ENCODE measurements at regions of chr2 and their contacts with region 1.

Region 1: DNA sequence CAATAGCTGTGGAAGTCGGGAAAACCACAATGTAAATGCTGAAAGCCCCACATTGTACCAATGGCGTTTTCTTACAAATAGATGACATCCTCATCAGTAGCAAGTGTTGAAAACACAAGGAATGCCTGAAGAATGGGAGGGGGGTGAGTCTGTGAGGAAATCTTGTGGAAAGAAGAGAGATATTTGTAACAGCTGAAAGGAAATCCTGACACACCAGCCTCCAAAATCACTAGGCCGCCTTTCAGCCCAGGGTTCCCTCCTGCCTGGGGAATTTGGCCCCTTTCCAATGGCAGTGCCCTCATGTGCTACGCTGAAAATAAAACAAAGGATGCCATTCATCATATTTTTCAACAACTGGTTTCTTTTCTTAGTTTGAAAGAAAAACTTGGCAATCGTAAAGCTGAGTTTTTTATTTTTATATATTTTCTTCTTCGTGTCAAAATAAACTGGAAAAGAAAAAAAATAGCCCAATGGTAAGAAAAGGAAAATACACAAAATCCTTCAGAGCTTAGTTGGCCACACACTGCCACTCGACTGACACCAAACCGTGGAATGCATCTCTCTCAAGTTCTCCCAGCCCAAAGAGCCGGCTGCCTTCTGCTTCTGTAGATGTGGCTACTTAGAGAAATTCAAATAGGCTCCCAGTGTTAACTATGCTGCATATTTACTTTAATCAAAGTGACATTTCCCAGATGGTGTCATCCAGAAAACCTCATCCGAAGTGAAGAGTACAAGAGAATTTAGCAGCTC is 52.0 kb downstream of the FTCDNL1 start:
- DNase-seq: peak; percentile 18 to 67 (median 56)
- H3K4me3 ChIP-seq: peak overlapping the region in 37 of 59 donors; percentile 1 to 54 (median 28)
- H3K27ac ChIP-seq: peak overlapping the region in 58 of 59 donors; percentile 55 to 96 (median 85)
- H3K27me3 ChIP-seq: no peaks in the 10 kb centered on the region
- CTCF ChIP-seq: peak in 5 of 56 donors; percentile 8 to 26 (median 13)

Region 2: GRCh38 chr2:199757233-199757870 is 41.7 kb before region 1 on chr2:
- intact Hi-C with region 1: loop called (anchors 1 to 5 kb)
- DNase-seq: peak; percentile 21 to 96 (median 90)
- H3K4me3 ChIP-seq: peak overlapping the region in 47 of 59 donors; percentile 3 to 62 (median 30)
- H3K27ac ChIP-seq: peak overlapping the region in 55 of 59 donors; percentile 19 to 87 (median 70)
- H3K27me3 ChIP-seq: no peaks in the 10 kb centered on the region
- CTCF ChIP-seq: peak in 18 of 56 donors; percentile 12 to 54 (median 30)

Region 3: DNA sequence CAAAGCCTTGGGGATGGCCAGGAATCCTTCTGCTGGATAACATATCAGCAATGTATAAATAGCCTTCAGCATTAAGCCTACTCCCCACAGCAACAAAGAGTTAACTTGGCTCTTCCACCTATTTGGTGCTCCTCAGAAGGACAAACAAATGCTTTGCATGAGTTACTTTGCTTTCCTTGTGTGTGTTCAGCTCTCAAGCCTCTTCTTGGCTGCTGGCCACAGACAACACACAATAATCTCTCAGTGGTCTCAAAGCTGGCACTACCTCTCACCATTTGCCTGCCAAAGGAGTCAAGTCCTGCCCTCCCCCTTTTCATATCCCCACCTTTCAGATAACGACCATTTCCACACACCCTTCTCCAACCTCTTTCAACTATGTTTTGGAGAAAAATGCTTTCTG is 34.5 kb after region 1 on chr2:
- intact Hi-C with region 1: loop called in 1 of 2 experiments (anchors 5 kb)
- DNase-seq: peak in 8 of 10 donors; percentile 22 to 74 (median 50)
- H3K4me3 ChIP-seq: no peak overlapping the region
- H3K27ac ChIP-seq: peak overlapping the region in 58 of 59 donors; percentile 8 to 91 (median 76)
- H3K27me3 ChIP-seq: no peaks in the 10 kb centered on the region
- CTCF ChIP-seq: no peak

Region 4: GRCh38 chr2:200239216-200239615 is 440.2 kb after region 1 on chr2:
- intact Hi-C with region 1: no loop called
- DNase-seq: no peak
- H3K4me3 ChIP-seq: no peak overlapping the region
- H3K27ac ChIP-seq: no peak overlapping the region
- H3K27me3 ChIP-seq: no peaks in the 10 kb centered on the region
- CTCF ChIP-seq: no peak

Region 5: DNA sequence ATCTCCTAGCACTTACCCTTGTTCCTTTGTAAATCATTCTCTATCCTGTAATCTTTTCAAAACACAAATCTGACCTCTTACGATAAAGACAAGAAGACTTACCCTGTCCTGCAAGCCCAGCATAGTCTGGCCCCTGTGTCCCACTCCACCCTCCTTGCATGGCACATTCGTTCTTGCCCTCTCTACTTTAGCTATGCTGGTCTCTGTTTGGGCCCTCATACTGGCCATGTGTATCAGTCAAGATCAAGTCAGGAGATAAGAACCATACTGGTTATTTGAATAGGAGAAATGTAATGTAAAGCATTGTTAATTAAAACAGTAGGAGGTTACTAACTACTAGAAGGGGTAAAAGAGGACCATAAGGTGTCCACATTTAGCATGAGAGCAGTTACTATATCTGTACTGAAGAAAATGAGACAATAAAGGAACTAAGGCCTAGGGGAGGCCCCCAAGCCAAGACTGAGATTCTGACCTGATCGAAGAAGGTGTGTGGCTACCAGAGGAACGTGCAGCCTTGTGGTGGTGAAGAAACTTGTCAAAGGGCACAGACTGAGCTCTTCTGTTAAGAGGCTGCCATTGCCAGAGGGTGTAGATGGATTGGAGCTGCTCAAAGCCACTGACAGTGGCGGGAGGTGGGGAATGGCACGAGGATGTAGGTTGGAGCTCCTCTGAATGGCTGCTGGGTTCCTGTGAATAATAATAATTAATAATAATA is 630.1 kb after region 1 on chr2:
- intact Hi-C with region 1: no loop called
- DNase-seq: no peak
- H3K4me3 ChIP-seq: no peak overlapping the region
- H3K27ac ChIP-seq: no peak overlapping the region
- H3K27me3 ChIP-seq: no peaks in the 10 kb centered on the region
- CTCF ChIP-seq: no peak

Measured in dorsolateral prefrontal cortex (tissue), 120 donors.